ENCODE measurements at regions of chr1 and their contacts with region 1.

Region 1: DNA sequence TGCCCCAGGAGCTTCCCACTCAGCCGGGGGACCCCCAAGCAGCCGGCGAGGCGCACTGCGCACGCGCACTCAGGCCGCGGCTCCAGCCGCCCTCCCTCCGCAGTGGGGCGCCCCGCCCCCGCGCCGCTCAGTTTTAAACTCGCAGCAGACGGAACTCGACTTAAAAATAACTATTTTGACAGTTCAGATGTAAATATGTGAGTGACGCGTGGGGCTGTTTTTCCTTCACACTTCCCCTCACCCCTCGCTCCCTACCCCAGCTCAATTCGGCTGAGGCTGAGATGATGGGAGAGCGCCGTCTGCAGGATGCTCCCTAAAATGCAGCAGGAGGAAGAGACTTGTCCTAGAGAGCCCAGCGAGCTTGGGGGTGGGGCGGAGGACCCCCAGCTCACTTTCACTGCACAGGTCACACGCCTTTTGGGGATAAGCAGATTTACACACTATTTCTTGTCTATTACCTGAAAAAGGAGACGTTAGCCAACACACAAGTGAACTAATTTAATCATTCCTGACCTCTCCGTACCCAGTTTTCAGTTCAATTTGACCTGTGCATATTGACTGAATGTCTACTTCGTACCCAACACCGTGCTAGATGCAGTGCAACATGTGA is 8.9 kb upstream of the LEMD1 start:
- DNase-seq: peak in 1 of 2 donors; percentile 48
- ATAC-seq: peak; percentile 80 to 82
- H3K4me3 ChIP-seq: peak overlapping the region; percentile 50 to 72 (median 64)
- H3K27ac ChIP-seq: peak overlapping the region in 3 of 4 donors; percentile 48 to 64 (median 55)
- H3K4me1 ChIP-seq: peaks cover 0 to 5% of the 10 kb centered on the region in 2 donors
- H3K27me3 ChIP-seq: no peaks in the 10 kb centered on the region
- CTCF ChIP-seq: peak; percentile 62 to 88 (median 79)
- POLR2A ChIP-seq: no peak

Region 2: DNA sequence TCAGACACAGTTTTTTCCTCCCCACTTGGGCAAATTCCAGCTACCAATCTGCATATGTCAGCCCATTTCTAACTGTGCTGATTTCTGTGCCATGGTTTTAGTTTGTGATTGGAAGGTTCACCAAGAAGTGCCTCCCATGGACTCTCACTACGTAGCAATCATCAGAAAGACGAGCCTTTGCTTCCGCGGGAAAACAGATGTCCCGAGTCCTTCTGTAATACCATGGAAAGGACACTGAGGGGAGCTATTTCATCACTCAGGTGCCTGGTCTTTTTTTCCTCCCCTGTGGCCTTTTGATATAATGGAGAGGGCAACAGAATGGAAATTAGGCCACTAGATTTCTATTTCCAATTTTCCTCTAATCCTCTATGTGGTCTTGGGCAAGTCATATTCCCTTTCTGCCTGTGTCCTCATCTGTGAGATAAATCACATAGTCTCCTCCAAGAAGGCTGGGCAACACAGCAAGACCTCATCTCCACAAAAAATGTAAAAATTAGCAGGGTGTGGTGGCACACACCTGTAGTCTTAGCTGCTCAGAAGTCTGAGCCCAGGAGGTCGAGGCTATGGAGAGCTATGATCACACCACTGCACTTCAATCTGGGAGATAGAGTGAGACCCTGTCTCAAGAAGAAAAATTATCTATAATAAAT is 33.7 kb before region 1 on chr1:
- in situ Hi-C with region 1: no loop called
- intact Hi-C with region 1: loop called (anchors 1 kb)
- DNase-seq: no peak
- ATAC-seq: peak; percentile 83 to 85
- H3K4me3 ChIP-seq: no peak overlapping the region
- H3K27ac ChIP-seq: no peak overlapping the region
- H3K4me1 ChIP-seq: no peaks in the 10 kb centered on the region
- H3K27me3 ChIP-seq: no peaks in the 10 kb centered on the region
- CTCF ChIP-seq: peak; percentile 49 to 73 (median 71)
- POLR2A ChIP-seq: no peak